CD4-positive, alpha-beta memory T cell (primary cell): ENCODE measurements at regions of chrX and their contacts with region 1.

Region 1: GRCh38 chrX:15769300-15769954 is 20.9 kb upstream of the ZRSR2 start:
- DNase-seq: no peak
- H3K4me3 ChIP-seq: no peak overlapping the region
- H3K4me3 Mint-ChIP-seq: peak overlapping the region in 1 of 8 donors; percentile 63
- H3K27ac ChIP-seq: no peak overlapping the region
- H3K27ac Mint-ChIP-seq: peak overlapping the region in 6 of 7 donors; percentile 13 to 89 (median 80)
- H3K4me1 ChIP-seq: peaks cover 3% of the 10 kb centered on the region
- H3K4me1 Mint-ChIP-seq: peaks cover 13 to 46% (median 21%) of the 10 kb centered on the region in 4 donors
- H3K27me3 ChIP-seq: no peaks in the 10 kb centered on the region
- H3K27me3 Mint-ChIP-seq: no peaks in the 10 kb centered on the region

Region 2: DNA sequence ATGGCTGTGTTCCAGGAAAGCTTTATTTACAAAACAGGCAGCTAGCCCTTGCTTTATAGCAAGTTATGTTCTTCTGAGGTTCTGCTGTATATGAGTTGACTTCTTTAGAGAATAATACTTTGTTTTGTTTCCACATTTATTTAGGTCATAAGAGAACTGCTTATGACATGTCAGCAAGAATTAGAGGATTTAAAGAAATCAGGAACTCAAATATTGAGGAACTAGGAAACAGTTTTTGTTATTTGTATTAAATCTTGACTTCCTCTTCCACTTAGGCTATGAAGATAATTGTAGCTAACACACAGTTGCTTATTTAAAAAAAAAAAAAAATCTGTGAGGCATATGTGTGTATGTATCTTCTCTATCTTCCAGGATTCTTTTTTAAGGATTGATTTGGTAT is 35.1 kb after region 1 on chrX:
- CTCF ChIA-PET with region 1: no interaction called
- POLR2A ChIA-PET with region 1: no interaction called
- intact Hi-C with region 1: loop called (anchors 5 kb)
- DNase-seq: no peak
- H3K4me3 ChIP-seq: no peak overlapping the region
- H3K4me3 Mint-ChIP-seq: no peak overlapping the region
- H3K27ac ChIP-seq: no peak overlapping the region
- H3K27ac Mint-ChIP-seq: no peak overlapping the region
- H3K4me1 ChIP-seq: no peaks in the 10 kb centered on the region
- H3K4me1 Mint-ChIP-seq: peaks cover 0 to 3% (median 1%) of the 10 kb centered on the region in 4 donors
- H3K27me3 ChIP-seq: no peaks in the 10 kb centered on the region
- H3K27me3 Mint-ChIP-seq: no peaks in the 10 kb centered on the region

Region 3: DNA sequence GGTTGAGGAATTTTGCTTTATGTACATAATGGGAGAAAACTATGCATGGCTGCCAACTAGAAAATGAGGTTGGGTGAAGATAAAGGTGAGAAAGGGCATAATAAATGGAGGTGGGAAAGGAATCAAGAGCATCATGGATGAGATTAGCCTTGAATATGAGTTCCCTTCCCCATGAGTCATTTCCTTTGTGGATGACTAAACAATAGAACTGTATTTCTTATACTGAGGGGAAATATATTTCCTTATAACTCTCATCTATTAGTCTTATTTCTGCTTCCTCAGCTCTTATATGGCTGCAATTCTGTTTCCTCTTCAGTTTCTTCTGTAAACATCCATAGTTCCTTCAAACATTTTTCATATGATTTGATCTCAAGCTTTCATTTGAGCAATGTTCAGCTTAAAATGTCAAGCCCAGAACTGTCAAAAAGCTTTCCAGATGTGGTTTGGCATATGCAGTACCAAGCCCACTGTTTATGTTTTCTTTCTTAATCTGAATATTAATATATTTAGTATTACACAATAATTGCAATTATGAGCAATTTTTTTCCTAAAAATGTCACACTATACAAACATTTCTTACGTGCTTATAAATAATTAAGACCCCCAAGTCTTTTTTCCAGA is 253.3 kb after region 1 on chrX:
- CTCF ChIA-PET with region 1: no interaction called
- POLR2A ChIA-PET with region 1: no interaction called
- intact Hi-C with region 1: no loop called
- DNase-seq: no peak
- H3K4me3 ChIP-seq: no peak overlapping the region
- H3K4me3 Mint-ChIP-seq: no peak overlapping the region
- H3K27ac ChIP-seq: no peak overlapping the region
- H3K27ac Mint-ChIP-seq: no peak overlapping the region
- H3K4me1 ChIP-seq: no peaks in the 10 kb centered on the region
- H3K4me1 Mint-ChIP-seq: no peaks in the 10 kb centered on the region
- H3K27me3 ChIP-seq: no peaks in the 10 kb centered on the region
- H3K27me3 Mint-ChIP-seq: peaks cover 4 to 6% of the 10 kb centered on the region in 2 donors